ENCODE measurements at regions of chr1 and their contacts with region 1.

Region 1: GRCh38 chr1:185156854-185157598 is at the starts of genes SWT1 and TRMT1L:
- DNase-seq: peak; percentile 99 to 100 (median 100)
- ATAC-seq: peak; percentile 98
- H3K4me3 ChIP-seq: peak within 1 kb of the TSS; percentile 98
- H3K27ac ChIP-seq: peak within 1 kb of the TSS; percentile 99
- H3K4me1 ChIP-seq: peaks cover 5% of the 10 kb centered on the region
- H3K27me3 ChIP-seq: no peaks in the 10 kb centered on the region
- total RNA-seq, gene SWT1: 5.3 to 7.7 (median 6.6) TPM
- total RNA-seq, gene TRMT1L: 14.5 to 31.1 (median 20.8) TPM

Region 2: DNA sequence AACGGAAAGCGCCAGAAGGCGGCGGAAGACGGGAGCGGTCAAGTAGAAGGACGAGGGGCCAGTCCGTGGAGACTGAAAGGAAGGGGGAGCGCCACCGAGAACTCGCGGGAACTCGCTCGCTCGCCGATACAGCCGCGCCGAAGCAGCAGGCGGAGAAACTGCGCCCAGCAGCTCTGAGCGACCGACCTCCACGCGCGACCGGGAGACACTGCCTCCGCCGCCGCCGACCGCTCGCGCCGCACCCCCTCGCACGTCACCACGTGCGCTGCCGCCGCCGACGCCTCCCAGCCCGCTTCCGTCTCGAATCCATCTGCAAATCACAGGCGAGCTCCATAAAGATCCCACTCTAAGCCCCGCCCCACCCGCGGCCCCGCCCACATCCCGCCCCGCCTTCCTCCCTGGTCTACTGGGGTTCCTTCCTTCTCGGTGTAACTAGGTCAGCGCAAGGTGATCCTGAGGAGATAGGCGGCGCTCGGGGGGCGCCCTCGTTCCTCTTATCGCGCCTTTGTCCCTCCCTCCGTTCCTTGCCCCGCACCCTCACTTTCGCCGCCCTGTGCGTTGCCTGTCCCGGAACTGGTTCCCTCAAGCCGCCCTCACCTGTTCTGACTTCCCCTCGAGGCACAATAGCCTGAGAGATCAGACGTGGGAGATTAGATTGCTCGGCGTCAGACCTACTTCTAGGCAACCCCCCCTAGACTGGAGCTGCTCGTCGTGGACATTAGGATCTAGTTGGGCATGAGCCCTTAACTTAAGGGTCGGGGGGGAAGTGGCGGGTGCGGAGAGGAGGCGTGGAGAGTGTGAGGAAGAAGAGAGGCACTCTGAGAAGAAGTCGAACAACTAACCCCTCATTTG is 160.2 kb after region 1 on chr1 and contains the start of gene IVNS1ABP:
- intact Hi-C with region 1: loop called in 1 of 4 experiments (anchors 5 kb)
- DNase-seq: peak; percentile 95 to 98 (median 97)
- ATAC-seq: peak; percentile 94 to 95
- H3K4me3 ChIP-seq: peak within 1 kb of the TSS; percentile 64
- H3K27ac ChIP-seq: peak within 1 kb of the TSS; percentile 92
- H3K4me1 ChIP-seq: no peaks in the 10 kb centered on the region
- H3K27me3 ChIP-seq: no peaks in the 10 kb centered on the region
- total RNA-seq, gene IVNS1ABP: 36.7 to 37.4 (median 37.1) TPM